Endothelial cell of umbilical vein (primary cell): ENCODE measurements at regions of chr10 and their contacts with region 1.

Region 1: DNA sequence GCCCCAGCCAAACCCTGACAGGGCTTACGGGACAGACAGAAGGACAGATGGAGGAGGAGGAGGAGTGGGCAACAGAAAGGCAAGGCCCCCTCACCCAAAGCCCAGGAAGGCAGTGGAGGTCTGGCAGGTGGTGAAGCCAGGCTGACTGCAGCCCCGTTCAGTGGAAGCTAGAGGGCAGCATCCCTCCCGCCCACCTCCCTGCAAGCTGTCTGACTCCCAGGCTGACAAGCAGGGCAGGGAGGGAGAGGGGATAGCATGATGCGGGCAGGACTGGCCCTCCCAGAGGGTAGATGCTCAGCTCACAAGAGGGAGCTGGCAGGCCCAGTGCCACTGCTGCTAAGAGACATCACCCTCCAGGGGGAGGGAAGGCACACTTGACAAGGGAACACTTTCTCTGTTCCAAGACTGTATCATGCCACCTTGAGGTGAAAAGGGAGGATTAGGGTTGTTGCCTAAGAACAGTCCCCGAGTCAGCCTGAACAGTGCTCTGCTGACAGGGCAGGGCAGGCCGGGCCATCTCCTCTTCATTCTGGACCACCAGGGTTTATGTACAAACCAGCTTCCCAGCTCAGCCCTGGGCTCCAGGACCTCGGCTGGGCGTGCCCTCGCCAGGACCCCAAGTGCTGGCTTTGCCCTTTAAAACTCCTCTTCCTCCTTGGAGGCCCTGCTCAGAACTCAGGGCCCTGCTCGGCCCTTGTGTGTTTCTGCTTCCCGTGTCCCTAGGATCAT is 61.8 kb downstream of the RASGEF1A start:
- DNase-seq: peak; percentile 50
- H3K4me3 ChIP-seq: no peak overlapping the region
- H3K27ac ChIP-seq: no peak overlapping the region
- H3K4me1 ChIP-seq: no peaks in the 10 kb centered on the region
- H3K27me3 ChIP-seq: no peaks in the 10 kb centered on the region
- CTCF ChIP-seq: peak; percentile 65 to 93
- POLR2A ChIP-seq: no peak

Region 2: GRCh38 chr10:42866115-42866995 is 338.8 kb before region 1 on chr10:
- CTCF ChIA-PET with region 1: no interaction called
- POLR2A ChIA-PET with region 1: no interaction called
- dilution Hi-C with region 1: no loop called
- intact Hi-C with region 1: loop called (anchors 5 kb)
- DNase-seq: peak; percentile 65
- H3K4me3 ChIP-seq: no peak overlapping the region
- H3K27ac ChIP-seq: no peak overlapping the region
- H3K4me1 ChIP-seq: peaks cover 2% of the 10 kb centered on the region
- H3K27me3 ChIP-seq: peaks cover 6 to 21% of the 10 kb centered on the region in 2 experiments
- CTCF ChIP-seq: peak; percentile 52 to 87
- POLR2A ChIP-seq: no peak

Region 3: DNA sequence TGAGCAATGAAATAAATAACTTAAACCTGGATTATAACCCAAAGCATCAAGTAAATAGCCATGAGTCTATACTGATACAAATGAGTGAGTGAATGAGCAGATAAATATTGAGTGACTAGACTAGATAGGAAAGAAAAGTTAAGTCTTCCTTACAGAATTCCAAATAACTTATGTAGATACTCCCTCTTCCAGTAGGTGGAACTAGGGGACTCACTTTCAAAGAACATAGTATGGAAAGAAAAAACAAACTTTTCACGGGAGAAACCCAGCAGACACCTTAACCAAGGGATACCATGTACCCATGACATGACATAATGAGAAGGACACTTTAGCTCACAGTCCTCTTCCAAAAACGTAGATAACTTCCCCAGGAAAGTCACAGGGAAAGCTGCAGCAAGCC is 34.6 kb before region 1 on chr10:
- CTCF ChIA-PET with region 1: interaction called, 10 read pairs
- POLR2A ChIA-PET with region 1: no interaction called
- dilution Hi-C with region 1: no loop called
- intact Hi-C with region 1: no loop called
- DNase-seq: no peak
- H3K4me3 ChIP-seq: no peak overlapping the region
- H3K27ac ChIP-seq: no peak overlapping the region
- H3K4me1 ChIP-seq: peaks cover 8% of the 10 kb centered on the region
- H3K27me3 ChIP-seq: no peaks in the 10 kb centered on the region
- CTCF ChIP-seq: no peak
- POLR2A ChIP-seq: no peak

Region 4: DNA sequence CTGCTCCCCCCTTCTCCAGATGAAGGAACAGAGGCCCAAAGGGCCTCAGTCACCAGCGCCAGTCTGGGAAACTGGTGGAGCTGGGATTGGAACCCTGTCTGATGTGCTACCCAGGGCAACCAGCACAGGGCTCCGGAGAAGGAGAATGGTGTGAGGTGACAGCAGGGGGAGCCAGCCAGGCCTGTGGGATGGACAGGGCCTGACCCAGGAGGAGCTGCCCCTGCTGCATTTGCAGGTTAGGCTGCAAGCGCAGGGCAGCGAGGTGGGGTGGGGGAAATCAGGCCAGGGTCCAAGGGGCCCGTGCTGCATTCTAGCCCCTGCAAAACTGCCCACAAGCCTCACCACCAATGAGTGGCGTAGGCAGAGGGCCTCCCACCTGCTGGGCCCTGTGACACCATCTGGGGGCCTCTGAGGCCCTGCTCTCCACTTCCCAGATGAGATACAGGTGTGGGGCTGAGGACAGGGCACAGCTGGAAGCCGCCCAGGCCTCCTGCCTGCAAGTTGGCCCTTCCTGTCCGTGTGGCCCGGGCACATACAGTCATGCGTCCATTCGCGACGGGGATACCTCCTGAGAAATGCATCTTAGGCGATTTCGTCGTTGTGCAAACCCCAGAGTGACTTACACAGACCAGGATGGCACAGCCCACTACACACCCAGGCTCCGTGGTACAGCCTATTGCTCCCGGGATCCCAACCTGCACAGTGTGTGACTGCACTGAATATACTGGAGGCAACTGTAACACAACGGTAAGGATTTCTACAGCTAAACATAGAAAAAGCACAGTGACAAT is 16.5 kb after region 1 on chr10:
- CTCF ChIA-PET with region 1: interaction called, 30 read pairs
- POLR2A ChIA-PET with region 1: no interaction called
- dilution Hi-C with region 1: no loop called
- intact Hi-C with region 1: no loop called
- DNase-seq: no peak
- H3K4me3 ChIP-seq: no peak overlapping the region
- H3K27ac ChIP-seq: no peak overlapping the region
- H3K4me1 ChIP-seq: no peaks in the 10 kb centered on the region
- H3K27me3 ChIP-seq: peaks cover 2 to 3% of the 10 kb centered on the region in 2 experiments
- CTCF ChIP-seq: peak in 1 of 2 donors; percentile 18
- POLR2A ChIP-seq: no peak

Region 5: GRCh38 chr10:43336641-43337318 is 131.7 kb after region 1 on chr10:
- CTCF ChIA-PET with region 1: no interaction called
- POLR2A ChIA-PET with region 1: no interaction called
- dilution Hi-C with region 1: no loop called
- intact Hi-C with region 1: no loop called
- DNase-seq: no peak
- H3K4me3 ChIP-seq: no peak overlapping the region
- H3K27ac ChIP-seq: no peak overlapping the region
- H3K4me1 ChIP-seq: no peaks in the 10 kb centered on the region
- H3K27me3 ChIP-seq: no peaks in the 10 kb centered on the region
- CTCF ChIP-seq: no peak
- POLR2A ChIP-seq: no peak

Region 6: DNA sequence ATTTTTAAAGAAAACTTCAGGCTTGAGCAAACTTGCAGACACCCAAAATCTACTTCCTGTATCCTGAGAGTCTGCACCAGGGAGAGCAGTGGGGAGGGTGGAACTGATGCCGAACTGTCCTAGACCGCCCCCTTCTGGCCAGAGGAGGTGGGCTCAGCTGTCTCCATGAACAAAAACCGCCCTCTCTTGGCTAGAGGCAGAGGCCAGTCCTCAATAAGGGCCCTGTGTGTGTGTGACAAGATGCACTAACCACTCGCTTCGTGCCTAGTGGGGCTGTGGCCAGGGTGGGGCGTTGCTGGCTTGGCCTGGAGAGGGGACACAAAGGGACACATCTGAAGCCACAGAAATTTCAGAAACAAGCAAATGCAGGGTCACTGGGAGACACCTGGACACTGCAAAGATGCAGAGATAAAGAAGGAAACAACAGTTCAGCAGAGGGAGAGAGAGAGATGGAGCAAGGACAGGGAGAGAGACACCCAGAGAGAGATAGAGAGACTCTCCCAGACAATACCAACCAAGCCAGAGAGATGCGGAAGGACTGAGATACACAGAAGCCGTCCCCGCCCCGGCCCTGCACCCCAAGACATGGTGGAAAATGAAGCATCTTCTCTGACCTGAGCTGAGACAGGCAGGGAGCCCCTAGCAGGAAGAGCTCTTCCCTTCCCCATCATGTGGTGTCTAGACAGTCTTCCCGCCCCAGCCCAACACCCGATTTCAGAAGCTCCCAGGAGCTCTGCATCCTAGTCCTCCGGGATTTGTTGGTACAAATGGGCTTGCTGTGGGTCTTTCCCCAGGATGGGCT is 143.6 kb after region 1 on chr10:
- CTCF ChIA-PET with region 1: interaction called, 8 read pairs
- POLR2A ChIA-PET with region 1: no interaction called
- dilution Hi-C with region 1: no loop called
- intact Hi-C with region 1: loop called (anchors 1 kb)
- DNase-seq: peak; percentile 67
- H3K4me3 ChIP-seq: no peak overlapping the region
- H3K27ac ChIP-seq: no peak overlapping the region
- H3K4me1 ChIP-seq: no peaks in the 10 kb centered on the region
- H3K27me3 ChIP-seq: peaks cover 1 to 7% of the 10 kb centered on the region in 2 experiments
- CTCF ChIP-seq: peak; percentile 94
- POLR2A ChIP-seq: no peak